GM13976 (cell line): ENCODE measurements at regions of chr7 and their contacts with region 1.

Region 1: DNA sequence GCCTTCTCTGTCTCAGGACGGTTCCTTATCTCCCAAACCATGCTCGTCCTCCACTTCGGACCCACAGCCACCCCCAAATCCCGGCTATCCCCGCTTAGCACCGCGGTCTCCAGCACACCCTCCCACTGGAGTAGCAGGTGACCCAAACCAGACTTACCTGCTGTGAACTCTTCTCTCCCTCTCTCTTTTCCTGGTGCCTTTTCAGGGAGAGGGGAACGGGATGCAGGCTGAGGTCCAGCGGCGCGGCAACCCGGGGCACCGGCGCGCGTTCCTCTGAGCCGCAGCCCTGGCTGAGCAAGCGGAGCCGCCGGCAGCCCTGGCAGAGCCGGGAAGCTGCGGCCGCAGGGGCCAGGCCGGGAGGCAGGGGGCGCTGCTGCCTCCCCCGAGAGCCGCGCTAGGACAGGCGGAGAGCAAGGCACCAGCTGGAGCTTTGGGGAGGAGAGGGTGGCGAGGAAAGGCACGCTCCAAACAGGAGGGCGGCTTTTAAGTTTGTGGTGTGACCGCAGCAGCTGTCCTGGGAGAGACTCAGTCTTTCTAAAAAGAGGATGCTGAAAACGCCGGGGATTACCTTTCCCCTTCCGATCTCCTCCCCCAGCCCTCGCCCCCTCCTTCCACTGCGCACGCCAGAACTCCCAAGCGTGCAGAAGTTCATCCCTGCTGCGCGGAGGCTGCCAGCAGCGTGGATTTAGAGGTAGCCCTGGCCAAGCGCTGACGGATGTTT is at the start of gene SEMA3D:
- DNase-seq: peak; percentile 79
- CTCF ChIP-seq: peak; percentile 85

Region 2: GRCh38 chr7:84654273-84654672 is 532.4 kb before region 1 on chr7:
- in situ Hi-C with region 1: no loop called
- DNase-seq: no peak
- CTCF ChIP-seq: no peak

Region 3: GRCh38 chr7:85554236-85555178 is 367.8 kb after region 1 on chr7:
- in situ Hi-C with region 1: loop called (anchors 25 kb)
- DNase-seq: no peak
- CTCF ChIP-seq: peak; percentile 58